AG04450 (cell line): ENCODE measurements at regions of chr7 and their contacts with region 1.

Region 1: DNA sequence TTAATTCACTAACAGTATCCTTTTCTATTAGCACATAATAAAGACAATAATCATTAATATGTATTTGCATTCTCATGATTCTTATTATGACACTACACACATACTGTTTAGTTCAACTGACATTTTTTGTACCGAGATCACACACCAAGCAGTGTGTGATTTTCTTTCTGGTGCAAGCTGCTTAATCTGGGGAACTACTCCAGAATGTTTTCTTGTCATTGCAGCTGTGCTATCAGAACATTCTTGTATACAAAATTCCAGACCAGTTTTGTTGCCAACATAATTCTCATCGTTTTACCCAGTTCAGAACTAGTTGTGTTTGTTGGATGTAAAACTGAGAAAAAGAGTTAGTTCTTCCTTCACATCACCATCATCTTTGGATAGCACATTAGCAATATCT is 37.4 kb downstream of the VKORC1L1 start:
- DNase-seq: peak; percentile 4
- H3K4me3 ChIP-seq: no peak overlapping the region
- H3K27ac ChIP-seq: no peak overlapping the region
- H3K27me3 ChIP-seq: no peaks in the 10 kb centered on the region
- CTCF ChIP-seq: no peak

Region 2: GRCh38 chr7:65731562-65732035 is 178.6 kb before region 1 on chr7:
- CTCF ChIA-PET with region 1: no interaction called
- POLR2A ChIA-PET with region 1: no interaction called
- DNase-seq: no peak
- H3K4me3 ChIP-seq: no peak overlapping the region
- H3K27ac ChIP-seq: no peak overlapping the region
- H3K27me3 ChIP-seq: no peaks in the 10 kb centered on the region
- CTCF ChIP-seq: peak; percentile 41; the same call in 1 of the 2 replicates

Region 3: DNA sequence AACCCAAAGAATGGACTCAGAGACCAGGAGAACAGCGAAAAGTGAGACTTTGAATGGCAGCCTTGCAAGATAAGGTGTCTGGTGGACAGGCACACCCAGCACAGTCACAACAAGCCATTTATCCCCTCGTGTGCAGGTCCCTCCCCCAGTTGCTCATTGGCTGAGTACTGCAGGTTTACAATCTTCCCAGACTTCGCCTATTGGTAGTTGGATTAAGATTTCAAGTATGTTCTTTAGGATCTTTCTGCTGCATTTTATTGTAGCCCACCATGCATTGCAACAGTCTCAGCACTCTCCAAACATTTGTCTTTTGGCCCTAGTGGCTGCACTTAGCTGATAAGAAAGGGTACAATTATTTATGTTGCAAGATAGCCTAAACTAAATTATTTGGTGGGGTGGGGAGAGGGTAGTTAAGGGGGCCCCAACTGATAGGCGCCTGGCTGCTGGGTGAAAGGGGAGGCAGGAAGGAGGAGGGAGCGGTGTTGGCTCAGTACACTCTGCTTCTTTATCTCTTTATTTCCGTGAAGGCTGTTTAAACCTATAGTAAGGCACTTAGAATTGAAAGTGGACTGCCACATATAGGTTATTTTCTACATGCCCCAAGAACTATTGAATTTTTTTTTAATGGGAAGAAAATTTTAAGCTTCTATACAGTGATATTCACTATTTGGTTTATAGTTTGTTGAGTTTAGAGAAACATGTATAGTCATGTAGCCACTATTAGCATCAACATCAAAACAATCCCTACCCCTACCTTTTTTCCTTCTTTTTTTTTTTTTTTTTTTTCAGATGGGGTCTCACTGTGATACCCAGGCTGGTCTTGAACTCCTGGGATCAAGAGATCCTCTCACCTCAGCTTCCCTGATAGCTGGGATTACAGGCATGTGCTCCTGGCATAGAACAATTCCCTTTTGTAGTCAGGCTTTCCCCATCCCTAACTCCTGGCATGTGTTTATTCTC is 17.5 kb after region 1 on chr7:
- CTCF ChIA-PET with region 1: no interaction called
- POLR2A ChIA-PET with region 1: interaction called, 15 read pairs
- DNase-seq: no peak
- H3K4me3 ChIP-seq: no peak overlapping the region
- H3K27ac ChIP-seq: no peak overlapping the region
- H3K27me3 ChIP-seq: no peaks in the 10 kb centered on the region
- CTCF ChIP-seq: no peak